CD4-positive, alpha-beta memory T cell (primary cell): ENCODE measurements at regions of chr22 and their contacts with region 1.

Region 1: DNA sequence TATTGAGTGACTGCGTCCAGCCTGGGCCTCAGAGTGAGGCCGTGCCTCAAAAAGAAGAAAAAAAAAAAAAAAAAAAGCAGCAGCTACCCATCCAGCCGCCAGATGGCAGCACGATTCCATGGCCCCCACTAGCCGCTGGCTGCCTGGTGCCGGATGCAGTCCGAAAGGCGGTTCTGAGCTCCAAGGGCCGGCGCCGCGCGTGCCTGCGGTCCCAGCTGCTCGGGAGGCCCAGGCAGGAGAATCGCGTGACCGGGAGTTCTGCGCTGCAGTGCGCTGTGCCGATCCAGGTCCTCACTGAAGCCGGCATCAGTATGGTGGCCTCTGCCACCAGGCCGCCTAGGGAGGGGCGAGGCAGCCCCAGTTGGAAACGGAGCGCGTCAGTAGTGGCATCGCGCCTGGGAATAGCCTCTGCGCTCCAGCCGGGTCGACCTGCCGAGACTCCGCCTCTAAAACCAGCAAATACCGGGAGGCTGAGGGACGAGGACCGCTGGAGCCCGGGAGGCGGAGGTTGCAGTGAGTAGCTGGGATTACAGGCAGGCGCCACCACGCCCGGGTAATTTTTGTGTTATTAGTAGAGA is 19.3 kb downstream of the SCARF2 start:
- DNase-seq: peak; percentile 67 to 74 (median 69)
- H3K4me3 ChIP-seq: peak overlapping the region in 1 of 2 donors; percentile 51
- H3K4me3 Mint-ChIP-seq: peak overlapping the region in 7 of 8 donors; percentile 39 to 74 (median 70)
- H3K27ac ChIP-seq: no peak overlapping the region
- H3K27ac Mint-ChIP-seq: peak overlapping the region in 1 of 7 donors; percentile 35
- H3K4me1 ChIP-seq: peaks cover 6% of the 10 kb centered on the region
- H3K4me1 Mint-ChIP-seq: peaks cover 0 to 8% (median 3%) of the 10 kb centered on the region in 4 donors
- H3K27me3 ChIP-seq: no peaks in the 10 kb centered on the region
- H3K27me3 Mint-ChIP-seq: no peaks in the 10 kb centered on the region

Region 2: DNA sequence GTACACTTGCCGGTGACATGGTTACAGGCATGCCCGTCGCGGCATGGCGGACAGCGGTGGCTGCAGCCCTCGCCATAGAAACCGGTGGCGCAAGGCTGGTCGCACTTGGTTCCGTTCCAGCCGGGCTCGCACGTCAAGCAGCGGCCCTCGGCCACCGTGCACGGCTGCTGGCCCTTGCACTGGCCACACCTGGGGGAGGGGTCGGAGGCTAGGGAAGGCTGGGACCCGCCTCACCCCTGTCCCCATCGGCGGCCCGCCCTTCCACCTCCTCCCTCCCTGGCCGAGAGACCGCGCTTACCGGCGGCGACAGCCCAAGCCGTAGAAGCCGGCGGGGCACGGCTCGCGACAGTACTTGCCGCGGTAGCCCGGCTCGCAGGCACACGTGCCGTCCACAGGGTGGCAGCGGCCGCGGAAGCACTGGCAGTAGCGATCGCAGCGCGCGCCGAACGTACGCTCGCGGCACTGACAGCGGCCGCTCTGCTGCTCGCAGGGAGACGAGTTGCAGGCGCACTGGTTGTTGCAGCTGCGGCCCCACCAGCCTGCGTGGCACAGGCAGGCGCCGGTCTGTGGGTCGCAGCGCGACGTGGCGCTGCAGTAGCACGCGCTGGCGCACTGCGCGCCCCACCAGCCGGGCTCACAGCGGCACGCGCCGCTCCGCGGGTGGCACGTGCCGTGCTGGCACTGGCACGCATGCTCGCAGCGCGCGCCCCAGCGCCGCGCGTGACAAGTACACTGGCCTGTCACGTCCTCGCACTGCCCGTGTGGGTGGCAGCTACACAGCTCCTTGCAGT is 12.6 kb after region 1 on chr22:
- CTCF ChIA-PET with region 1: interaction called, 20 read pairs
- POLR2A ChIA-PET with region 1: interaction called, 6 read pairs
- intact Hi-C with region 1: no loop called
- DNase-seq: peak; percentile 61 to 72 (median 68)
- H3K4me3 ChIP-seq: peak overlapping the region in 1 of 2 donors; percentile 65
- H3K4me3 Mint-ChIP-seq: peak overlapping the region; percentile 67 to 91 (median 88)
- H3K27ac ChIP-seq: no peak overlapping the region
- H3K27ac Mint-ChIP-seq: no peak overlapping the region
- H3K4me1 ChIP-seq: peaks cover 37% of the 10 kb centered on the region
- H3K4me1 Mint-ChIP-seq: peaks cover 10 to 49% (median 18%) of the 10 kb centered on the region in 4 donors
- H3K27me3 ChIP-seq: peaks cover 19% of the 10 kb centered on the region
- H3K27me3 Mint-ChIP-seq: peaks cover 20% of the 10 kb centered on the region in 2 donors

Region 3: DNA sequence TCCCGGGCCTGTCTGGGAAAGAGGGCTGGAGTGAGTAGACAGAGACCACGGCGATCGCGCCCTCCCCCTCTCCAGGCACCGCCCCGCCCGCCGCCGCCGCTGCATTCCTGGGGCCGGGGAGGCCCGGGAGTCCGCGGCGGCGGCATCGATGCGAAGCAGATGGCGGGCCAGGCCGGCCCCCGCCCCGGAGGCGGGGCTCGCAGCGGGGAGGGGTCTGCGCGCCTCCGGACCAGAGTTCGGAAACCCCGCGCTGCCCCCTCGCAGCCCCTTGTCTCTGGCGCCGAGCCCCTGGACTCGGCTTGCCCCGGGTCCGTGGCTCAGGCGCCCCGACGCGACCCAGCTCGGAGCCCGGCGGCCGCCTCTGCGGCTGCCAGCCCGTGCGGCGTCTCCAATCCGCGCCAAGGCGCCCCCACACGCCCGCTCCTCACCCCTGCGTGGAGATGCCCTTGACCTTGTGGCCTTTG is 18.0 kb after region 1 on chr22:
- CTCF ChIA-PET with region 1: interaction called, 11 read pairs
- POLR2A ChIA-PET with region 1: interaction called, 4 read pairs
- intact Hi-C with region 1: no loop called
- DNase-seq: no peak
- H3K4me3 ChIP-seq: peak overlapping the region in 1 of 2 donors; percentile 43
- H3K4me3 Mint-ChIP-seq: peak overlapping the region; percentile 79 to 94 (median 84)
- H3K27ac ChIP-seq: no peak overlapping the region
- H3K27ac Mint-ChIP-seq: peak overlapping the region in 1 of 7 donors; percentile 44
- H3K4me1 ChIP-seq: peaks cover 27% of the 10 kb centered on the region
- H3K4me1 Mint-ChIP-seq: peaks cover 7 to 35% (median 12%) of the 10 kb centered on the region in 4 donors
- H3K27me3 ChIP-seq: peaks cover 28% of the 10 kb centered on the region
- H3K27me3 Mint-ChIP-seq: peaks cover 25 to 26% of the 10 kb centered on the region in 2 donors

Region 4: GRCh38 chr22:20456064-20456721 is 37.9 kb after region 1 on chr22:
- CTCF ChIA-PET with region 1: interaction called, 107 read pairs
- POLR2A ChIA-PET with region 1: interaction called, 13 read pairs
- intact Hi-C with region 1: loop called (anchors 1 kb)
- DNase-seq: peak; percentile 72 to 79 (median 74)
- H3K4me3 ChIP-seq: no peak overlapping the region
- H3K4me3 Mint-ChIP-seq: peak overlapping the region in 3 of 8 donors; percentile 9 to 20 (median 15)
- H3K27ac ChIP-seq: no peak overlapping the region
- H3K27ac Mint-ChIP-seq: peak overlapping the region in 6 of 7 donors; percentile 2 to 75 (median 54)
- H3K4me1 ChIP-seq: peaks cover 25% of the 10 kb centered on the region
- H3K4me1 Mint-ChIP-seq: peaks cover 18 to 49% (median 25%) of the 10 kb centered on the region in 4 donors
- H3K27me3 ChIP-seq: no peaks in the 10 kb centered on the region
- H3K27me3 Mint-ChIP-seq: no peaks in the 10 kb centered on the region

Region 5: DNA sequence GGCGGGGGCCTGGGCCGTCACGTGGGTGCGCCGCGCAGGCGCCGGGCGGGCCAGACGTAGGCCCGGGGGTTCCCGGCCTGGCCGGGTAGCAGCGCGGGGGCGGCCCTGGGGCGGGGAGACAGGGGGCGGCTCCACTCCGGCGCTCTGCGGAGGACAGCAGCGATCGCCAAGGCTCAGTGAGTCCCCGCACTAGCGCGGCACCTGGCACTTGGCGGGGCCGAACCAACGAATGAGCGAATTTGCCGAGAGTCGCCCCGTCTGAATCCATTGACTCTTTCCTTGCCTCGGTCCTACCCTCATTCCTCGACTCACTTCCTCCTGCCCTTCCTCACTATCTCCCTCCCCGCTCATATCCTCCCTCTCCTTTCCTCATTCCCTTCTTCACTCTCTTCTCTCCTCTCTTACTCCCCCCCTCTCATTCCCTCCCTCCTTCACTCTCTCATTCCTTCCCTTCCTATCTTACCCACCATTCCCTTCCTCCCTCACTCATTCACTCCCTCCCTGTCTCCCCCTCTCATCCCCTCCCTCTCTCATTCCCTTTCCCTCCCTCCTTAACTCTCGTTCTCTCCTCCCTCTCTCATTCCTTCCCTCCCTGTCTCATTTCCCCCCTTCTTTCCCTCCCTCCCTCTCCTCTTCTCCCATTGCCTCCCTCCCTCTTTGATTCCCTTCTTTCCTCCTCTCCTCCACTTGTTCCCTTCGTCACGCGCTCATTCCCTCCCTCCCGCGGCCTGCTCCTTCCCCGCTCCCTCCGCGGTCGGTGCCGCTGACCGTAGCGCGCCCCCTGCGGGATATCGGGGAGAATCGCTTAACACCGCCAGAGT is 77.8 kb after region 1 on chr22:
- CTCF ChIA-PET with region 1: interaction called, 12 read pairs
- POLR2A ChIA-PET with region 1: no interaction called
- intact Hi-C with region 1: loop called (anchors 1 kb)
- DNase-seq: peak; percentile 89 to 92 (median 91)
- H3K4me3 ChIP-seq: peak overlapping the region; percentile 53 to 85
- H3K4me3 Mint-ChIP-seq: peak overlapping the region; percentile 90 to 96 (median 93)
- H3K27ac ChIP-seq: peak overlapping the region; percentile 91
- H3K27ac Mint-ChIP-seq: peak overlapping the region; percentile 83 to 98 (median 95)
- H3K4me1 ChIP-seq: peaks cover 42% of the 10 kb centered on the region
- H3K4me1 Mint-ChIP-seq: peaks cover 21 to 56% (median 40%) of the 10 kb centered on the region in 4 donors
- H3K27me3 ChIP-seq: no peaks in the 10 kb centered on the region
- H3K27me3 Mint-ChIP-seq: no peaks in the 10 kb centered on the region

Region 6: GRCh38 chr22:20741634-20742581 is 323.6 kb after region 1 on chr22:
- CTCF ChIA-PET with region 1: interaction called, 15 read pairs
- POLR2A ChIA-PET with region 1: no interaction called
- intact Hi-C with region 1: loop called (anchors 1 kb)
- DNase-seq: peak; percentile 41 to 50 (median 47)
- H3K4me3 ChIP-seq: no peak overlapping the region
- H3K4me3 Mint-ChIP-seq: no peak overlapping the region
- H3K27ac ChIP-seq: no peak overlapping the region
- H3K27ac Mint-ChIP-seq: peak overlapping the region in 1 of 7 donors; percentile 62
- H3K4me1 ChIP-seq: no peaks in the 10 kb centered on the region
- H3K4me1 Mint-ChIP-seq: peaks cover 0 to 2% (median 0%) of the 10 kb centered on the region in 4 donors
- H3K27me3 ChIP-seq: no peaks in the 10 kb centered on the region
- H3K27me3 Mint-ChIP-seq: no peaks in the 10 kb centered on the region

Region 7: DNA sequence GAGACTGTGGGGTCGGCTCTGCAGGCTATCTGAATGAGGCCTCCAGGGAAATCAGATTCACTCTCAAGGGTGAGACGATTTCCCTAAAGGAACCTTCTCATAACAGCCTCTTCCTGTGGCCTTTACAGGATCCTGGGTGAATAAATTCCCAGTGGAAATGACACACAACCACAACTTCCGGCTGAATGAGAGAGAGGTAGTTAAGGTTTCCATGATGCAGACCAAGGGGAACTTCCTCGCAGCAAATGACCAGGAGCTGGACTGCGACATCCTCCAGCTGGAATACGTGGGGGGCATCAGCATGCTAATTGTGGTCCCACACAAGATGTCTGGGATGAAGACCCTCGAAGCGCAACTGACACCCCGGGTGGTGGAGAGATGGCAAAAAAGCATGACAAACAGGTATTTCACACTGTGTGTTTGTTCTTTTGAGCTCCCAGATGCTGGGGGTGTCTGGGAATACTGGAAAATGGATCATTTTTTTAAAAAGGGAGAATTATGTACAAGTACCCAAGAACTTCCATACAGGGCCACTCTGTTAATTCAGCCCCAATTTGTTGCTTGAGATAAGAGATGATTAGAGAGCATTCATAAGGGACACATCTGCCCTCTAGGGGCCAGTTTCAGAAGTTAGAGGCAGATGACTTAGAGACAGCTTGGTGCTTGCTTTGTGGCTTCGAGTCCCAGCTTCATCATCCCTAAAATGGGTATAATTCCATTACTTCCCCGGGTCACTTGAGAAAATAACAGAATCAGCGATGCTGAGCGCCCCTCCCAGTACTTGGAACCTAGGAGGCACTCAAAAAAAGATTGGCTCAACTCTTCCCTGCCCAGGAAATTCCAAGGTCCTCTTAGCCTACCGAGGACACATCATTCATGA is 365.8 kb after region 1 on chr22:
- CTCF ChIA-PET with region 1: interaction called, 9 read pairs
- POLR2A ChIA-PET with region 1: no interaction called
- intact Hi-C with region 1: loop called (anchors 2 kb)
- DNase-seq: peak; percentile 35 to 61 (median 40)
- H3K4me3 ChIP-seq: no peak overlapping the region
- H3K4me3 Mint-ChIP-seq: no peak overlapping the region
- H3K27ac ChIP-seq: no peak overlapping the region
- H3K27ac Mint-ChIP-seq: peak overlapping the region in 4 of 7 donors; percentile 14 to 63 (median 35)
- H3K4me1 ChIP-seq: no peaks in the 10 kb centered on the region
- H3K4me1 Mint-ChIP-seq: peaks cover 0 to 7% (median 3%) of the 10 kb centered on the region in 4 donors
- H3K27me3 ChIP-seq: no peaks in the 10 kb centered on the region
- H3K27me3 Mint-ChIP-seq: no peaks in the 10 kb centered on the region

Region 8: GRCh38 chr22:21849489-21849888 is 1431.2 kb after region 1 on chr22:
- CTCF ChIA-PET with region 1: no interaction called
- POLR2A ChIA-PET with region 1: no interaction called
- intact Hi-C with region 1: no loop called
- DNase-seq: no peak
- H3K4me3 ChIP-seq: no peak overlapping the region
- H3K4me3 Mint-ChIP-seq: no peak overlapping the region
- H3K27ac ChIP-seq: no peak overlapping the region
- H3K27ac Mint-ChIP-seq: peak overlapping the region in 3 of 7 donors; percentile 23 to 72 (median 65)
- H3K4me1 ChIP-seq: peaks cover 50% of the 10 kb centered on the region
- H3K4me1 Mint-ChIP-seq: peaks cover 48 to 83% (median 66%) of the 10 kb centered on the region in 4 donors
- H3K27me3 ChIP-seq: no peaks in the 10 kb centered on the region
- H3K27me3 Mint-ChIP-seq: no peaks in the 10 kb centered on the region